ENCODE measurements at regions of chr11 and their contacts with region 1.

Region 1: GRCh38 chr11:124900464-124900863 is 2.8 kb upstream of the ROBO4 start:
- DNase-seq: peak; percentile 93
- ATAC-seq: peak; percentile 74
- H3K4me3 ChIP-seq: no peak overlapping the region
- H3K27ac ChIP-seq: peak overlapping the region; percentile 77
- H3K4me1 ChIP-seq: peaks cover 37% of the 10 kb centered on the region
- H3K27me3 ChIP-seq: no peaks in the 10 kb centered on the region
- CTCF ChIP-seq: no peak
- POLR2A ChIP-seq: peak; percentile 66; the same call in 1 of the 2 replicates
- RAD21 ChIP-seq: no peak; the same call in 1 of the 2 replicates

Region 2: DNA sequence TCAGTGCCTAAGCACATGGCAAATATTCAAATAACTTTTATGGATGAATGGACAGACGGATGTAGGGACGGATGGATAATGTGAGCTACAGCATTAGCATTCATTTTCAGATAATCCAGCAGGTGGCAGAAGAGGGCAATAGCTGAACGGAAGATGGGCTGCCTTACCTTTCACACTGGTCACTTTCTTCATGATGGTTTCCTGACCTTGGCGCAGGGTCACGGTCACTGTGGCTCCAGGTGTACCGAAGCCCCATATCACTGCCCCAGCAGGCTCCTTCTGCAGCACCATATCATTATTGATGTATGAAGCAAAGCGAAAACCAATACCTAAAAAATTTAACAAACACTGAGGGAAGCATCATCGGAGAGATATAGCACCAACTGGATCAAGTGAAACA is 231.3 kb before region 1 on chr11:
- CTCF ChIA-PET with region 1: no interaction called
- POLR2A ChIA-PET with region 1: no interaction called
- dilution Hi-C with region 1: no loop called
- in situ Hi-C with region 1: no loop called
- intact Hi-C with region 1: no loop called
- DNase-seq: peak; percentile 54
- ATAC-seq: peak; percentile 30
- H3K4me3 ChIP-seq: no peak overlapping the region
- H3K27ac ChIP-seq: no peak overlapping the region
- H3K4me1 ChIP-seq: peaks cover 3% of the 10 kb centered on the region; the same call in 1 of the 2 replicates
- H3K27me3 ChIP-seq: no peaks in the 10 kb centered on the region
- CTCF ChIP-seq: peak; percentile 82
- POLR2A ChIP-seq: no peak
- RAD21 ChIP-seq: peak; percentile 91

Region 3: DNA sequence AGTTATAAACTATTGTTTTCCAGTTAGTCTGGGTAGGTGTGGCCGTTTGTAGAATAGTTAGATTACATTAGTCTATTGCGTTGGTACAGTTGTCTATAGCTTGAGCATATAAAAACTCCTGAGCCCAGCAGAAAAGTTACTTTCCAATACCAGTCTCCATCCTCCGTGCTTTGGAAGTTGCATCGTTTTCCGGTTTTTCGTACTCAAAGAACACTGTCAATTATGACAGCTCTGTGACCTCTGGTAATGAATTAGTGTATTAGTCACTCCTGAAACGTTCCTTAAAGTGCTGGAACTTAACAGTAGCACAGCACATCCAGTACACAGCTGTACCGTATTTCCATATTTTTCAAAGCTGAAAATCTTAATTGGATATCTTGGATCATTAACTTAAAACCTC is 99.5 kb before region 1 on chr11:
- CTCF ChIA-PET with region 1: no interaction called
- POLR2A ChIA-PET with region 1: no interaction called
- dilution Hi-C with region 1: no loop called
- in situ Hi-C with region 1: no loop called
- intact Hi-C with region 1: no loop called
- DNase-seq: peak; percentile 39
- ATAC-seq: peak; percentile 2; the same call in 1 of the 2 replicates
- H3K4me3 ChIP-seq: peak overlapping the region; percentile 68
- H3K27ac ChIP-seq: peak overlapping the region; percentile 99; the same call in 1 of the 2 replicates
- H3K4me1 ChIP-seq: peaks cover 1% of the 10 kb centered on the region
- H3K27me3 ChIP-seq: no peaks in the 10 kb centered on the region
- CTCF ChIP-seq: no peak
- POLR2A ChIP-seq: no peak
- RAD21 ChIP-seq: no peak

Region 4: GRCh38 chr11:124953753-124954589 is 53.5 kb after region 1 on chr11 and contains the start of gene CCDC15:
- CTCF ChIA-PET with region 1: no interaction called
- POLR2A ChIA-PET with region 1: interaction called, 3 read pairs
- dilution Hi-C with region 1: no loop called
- in situ Hi-C with region 1: no loop called
- intact Hi-C with region 1: loop called (anchors 2 kb)
- DNase-seq: peak; percentile 97
- ATAC-seq: peak; percentile 99
- H3K4me3 ChIP-seq: peak within 1 kb of the TSS; percentile 60
- H3K27ac ChIP-seq: peak within 1 kb of the TSS; percentile 75
- H3K4me1 ChIP-seq: peaks cover 2% of the 10 kb centered on the region; the same call in 1 of the 2 replicates
- H3K27me3 ChIP-seq: no peaks in the 10 kb centered on the region
- CTCF ChIP-seq: 0 out of 2 replicates have a peak, but pooled peaks have one; percentile 3
- POLR2A ChIP-seq: peak; percentile 90
- RAD21 ChIP-seq: peak; percentile 5; the same call in 1 of the 2 replicates
- total RNA-seq, gene CCDC15: 2.0 and 2.5 TPM in 2 replicates